Gastrocnemius medialis (tissue), 4 donors: ENCODE measurements at regions of chr6 and their contacts with region 1.

Region 1: GRCh38 chr6:161370880-161371279 is 97.0 kb upstream of the AGPAT4 start:
- DNase-seq: no peak
- ATAC-seq: no peak
- H3K4me3 ChIP-seq: no peak overlapping the region
- H3K27ac ChIP-seq: no peak overlapping the region
- H3K4me1 ChIP-seq: peaks cover 4 to 7% of the 10 kb centered on the region in 2 donors
- H3K27me3 ChIP-seq: no peaks in the 10 kb centered on the region
- CTCF ChIP-seq: peak; percentile 21 to 62 (median 43)
- POLR2A ChIP-seq: no peak

Region 2: GRCh38 chr6:160930547-160931377 is 440.1 kb before region 1 on chr6:
- in situ Hi-C with region 1: loop called (anchors 5 kb)
- intact Hi-C with region 1: loop called (anchors 1 kb)
- DNase-seq: peak; percentile 26 to 28
- ATAC-seq: peak; percentile 77 to 82
- H3K4me3 ChIP-seq: peak overlapping the region; percentile 43 to 64 (median 49)
- H3K27ac ChIP-seq: no peak overlapping the region
- H3K4me1 ChIP-seq: peaks cover 0 to 6% of the 10 kb centered on the region in 2 donors
- H3K27me3 ChIP-seq: peaks cover 0 to 19% (median 4%) of the 10 kb centered on the region in 3 donors
- CTCF ChIP-seq: peak; percentile 70 to 91 (median 83)
- POLR2A ChIP-seq: no peak

Region 3: DNA sequence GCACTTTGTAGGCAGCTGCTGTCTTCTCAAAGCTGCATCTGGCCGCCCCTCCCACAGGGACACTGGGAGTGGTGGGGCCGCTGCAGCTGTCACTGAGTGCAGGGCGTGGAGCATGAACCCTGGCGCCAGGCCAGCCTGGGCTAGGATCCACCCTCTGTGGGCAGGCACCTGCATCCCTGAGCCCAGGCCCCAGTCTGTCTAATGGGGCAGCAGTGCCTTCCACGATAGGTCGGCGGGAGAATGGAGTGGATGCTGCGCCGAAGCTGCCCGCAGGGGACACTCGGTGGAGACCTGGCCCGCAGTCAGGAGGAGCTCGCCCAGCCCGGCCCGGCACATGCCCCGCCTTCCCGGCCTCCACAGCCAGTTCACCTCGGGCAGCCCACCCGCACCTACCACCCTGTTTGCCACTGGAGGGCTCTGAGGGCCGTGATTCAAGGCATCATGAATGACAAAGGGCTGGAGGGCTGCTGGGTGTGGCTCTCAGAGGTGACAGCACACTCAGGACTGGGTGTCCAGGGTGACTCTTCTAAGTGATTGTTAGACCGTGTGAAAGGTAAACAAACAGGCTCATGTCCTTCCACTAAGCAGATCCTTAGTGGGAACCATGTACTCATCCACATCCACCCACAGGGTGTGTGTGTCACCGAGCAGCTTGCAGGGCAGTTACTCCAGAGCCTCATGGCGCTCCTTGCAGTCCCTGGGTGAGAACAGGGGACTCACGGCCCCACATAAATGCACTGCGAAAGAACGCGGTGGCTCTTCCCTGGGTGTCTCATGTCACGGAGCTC is 230.9 kb before region 1 on chr6:
- in situ Hi-C with region 1: no loop called
- intact Hi-C with region 1: loop called (anchors 5 kb)
- DNase-seq: peak in 1 of 2 donors; percentile 22
- ATAC-seq: no peak
- H3K4me3 ChIP-seq: no peak overlapping the region
- H3K27ac ChIP-seq: no peak overlapping the region
- H3K4me1 ChIP-seq: no peaks in the 10 kb centered on the region
- H3K27me3 ChIP-seq: no peaks in the 10 kb centered on the region
- CTCF ChIP-seq: peak in 1 of 5 experiments; percentile 47
- POLR2A ChIP-seq: no peak

Region 4: GRCh38 chr6:161171207-161171606 is 199.7 kb before region 1 on chr6:
- in situ Hi-C with region 1: no loop called
- intact Hi-C with region 1: no loop called
- DNase-seq: no peak
- ATAC-seq: no peak
- H3K4me3 ChIP-seq: no peak overlapping the region
- H3K27ac ChIP-seq: no peak overlapping the region
- H3K4me1 ChIP-seq: no peaks in the 10 kb centered on the region
- H3K27me3 ChIP-seq: no peaks in the 10 kb centered on the region
- CTCF ChIP-seq: no peak
- POLR2A ChIP-seq: no peak

Region 5: DNA sequence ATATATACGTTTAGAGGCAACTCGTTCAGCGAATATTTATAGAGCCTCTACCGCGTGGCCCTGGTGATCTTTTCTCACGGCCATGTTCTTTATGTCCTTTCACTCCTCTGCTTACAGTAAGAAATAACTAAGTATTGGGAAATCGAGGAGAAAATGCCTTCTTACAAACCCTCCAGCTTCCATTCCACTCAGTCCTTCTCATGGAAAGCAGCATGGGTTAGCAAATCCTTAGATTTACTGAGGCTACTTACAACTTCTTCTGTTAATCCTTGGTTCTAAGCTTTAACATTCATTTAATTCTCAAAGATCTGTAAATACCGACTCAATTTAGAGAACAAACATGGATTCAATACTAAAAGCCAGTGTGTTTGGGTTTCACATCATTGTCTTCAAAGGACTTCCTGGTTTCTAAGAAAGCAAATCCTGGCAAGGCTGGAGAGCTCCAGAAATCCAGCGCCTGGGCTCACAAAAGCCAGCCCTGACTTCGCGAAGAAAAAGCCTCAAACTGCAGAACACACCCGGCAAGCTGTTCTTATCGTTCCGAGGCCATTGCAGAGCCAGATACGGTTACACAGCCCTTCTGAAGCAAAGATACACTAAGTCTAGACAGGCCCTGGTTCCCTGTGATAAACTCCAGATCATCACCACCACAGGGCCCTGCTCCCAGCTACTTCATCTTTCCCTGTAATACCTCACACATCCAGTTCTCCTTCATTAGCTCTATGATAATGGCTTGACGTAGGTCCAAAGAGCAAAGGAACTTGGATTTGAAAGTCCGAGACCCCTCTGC is 116.2 kb before region 1 on chr6:
- in situ Hi-C with region 1: no loop called
- intact Hi-C with region 1: no loop called
- DNase-seq: no peak
- ATAC-seq: no peak
- H3K4me3 ChIP-seq: no peak overlapping the region
- H3K27ac ChIP-seq: no peak overlapping the region
- H3K4me1 ChIP-seq: no peaks in the 10 kb centered on the region
- H3K27me3 ChIP-seq: no peaks in the 10 kb centered on the region
- CTCF ChIP-seq: no peak
- POLR2A ChIP-seq: no peak

Region 6: GRCh38 chr6:161301338-161301737 is 69.5 kb before region 1 on chr6:
- in situ Hi-C with region 1: no loop called
- intact Hi-C with region 1: no loop called
- DNase-seq: peak in 1 of 2 donors; percentile 13
- ATAC-seq: no peak
- H3K4me3 ChIP-seq: no peak overlapping the region
- H3K27ac ChIP-seq: no peak overlapping the region
- H3K4me1 ChIP-seq: no peaks in the 10 kb centered on the region
- H3K27me3 ChIP-seq: no peaks in the 10 kb centered on the region
- CTCF ChIP-seq: no peak
- POLR2A ChIP-seq: no peak